PC-9 (cell line): ENCODE measurements at regions of chrX and their contacts with region 1.

Region 1: GRCh38 chrX:134469486-134469885 is 9.5 kb downstream of the HPRT1 start:
- DNase-seq: no peak
- H3K4me3 ChIP-seq: no peak overlapping the region
- H3K27ac ChIP-seq: no peak overlapping the region; the same call in 1 of the 2 replicates
- H3K4me1 ChIP-seq: peaks cover 4% of the 10 kb centered on the region; the same call in 1 of the 2 replicates
- H3K27me3 ChIP-seq: no peaks in the 10 kb centered on the region
- CTCF ChIP-seq: no peak

Region 2: GRCh38 chrX:134908356-134908755 is 438.9 kb after region 1 on chrX:
- CTCF ChIA-PET with region 1: interaction called, 14 read pairs
- POLR2A ChIA-PET with region 1: no interaction called
- intact Hi-C with region 1: no loop called
- DNase-seq: no peak
- H3K4me3 ChIP-seq: no peak overlapping the region
- H3K27ac ChIP-seq: no peak overlapping the region
- H3K4me1 ChIP-seq: peaks cover 2% of the 10 kb centered on the region; the same call in 1 of the 2 replicates
- H3K27me3 ChIP-seq: no peaks in the 10 kb centered on the region
- CTCF ChIP-seq: peak; percentile 53

Region 3: GRCh38 chrX:134990801-134991481 is 521.5 kb after region 1 on chrX and contains the start of gene SMIM10:
- CTCF ChIA-PET with region 1: no interaction called
- POLR2A ChIA-PET with region 1: interaction called, 18 read pairs
- intact Hi-C with region 1: no loop called
- DNase-seq: peak in 1 of 2 experiments; percentile 39
- H3K4me3 ChIP-seq: no peak within 1 kb of the TSS
- H3K27ac ChIP-seq: no peak within 1 kb of the TSS
- H3K4me1 ChIP-seq: no peaks in the 10 kb centered on the region
- H3K27me3 ChIP-seq: no peaks in the 10 kb centered on the region
- CTCF ChIP-seq: no peak
- total RNA-seq, gene SMIM10: 0.50 and 0.52 TPM in 2 replicates